Endothelial cell of umbilical vein (primary cell): ENCODE measurements at regions of chr11 and their contacts with region 1.

Region 1: DNA sequence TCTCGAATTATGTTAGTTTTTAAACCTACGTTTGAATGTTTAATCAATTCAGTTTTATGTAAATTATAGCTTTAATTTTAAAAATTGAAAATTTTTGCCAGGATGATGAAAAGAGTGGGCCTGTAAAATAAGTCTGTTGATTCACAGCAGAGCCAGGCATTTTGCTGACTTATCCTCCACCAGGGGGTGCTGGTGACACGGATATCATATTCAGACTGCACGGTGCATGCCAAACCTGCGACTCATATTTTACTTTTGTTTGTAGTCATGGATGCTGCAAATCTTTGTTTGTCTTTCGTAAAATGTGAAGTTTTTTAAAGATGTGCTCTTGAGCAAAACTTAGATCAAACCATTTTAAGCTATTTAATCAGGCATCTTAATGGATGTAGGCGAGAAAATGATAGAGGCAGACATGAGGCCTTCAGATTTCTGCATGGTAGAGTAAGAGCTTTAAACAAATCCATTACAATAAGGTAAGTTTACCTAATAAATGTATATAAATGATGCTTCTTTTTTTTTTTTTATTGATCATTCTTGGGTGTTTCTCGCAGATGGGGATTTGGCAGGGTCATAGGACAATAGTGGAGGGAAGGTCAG is 3.6 kb upstream of the OR8B3 start:
- DNase-seq: peak; percentile 67
- H3K4me3 ChIP-seq: no peak overlapping the region
- H3K27ac ChIP-seq: no peak overlapping the region
- H3K4me1 ChIP-seq: no peaks in the 10 kb centered on the region
- H3K27me3 ChIP-seq: peaks cover 2 to 10% of the 10 kb centered on the region in 2 experiments
- CTCF ChIP-seq: peak; percentile 80
- POLR2A ChIP-seq: no peak

Region 2: GRCh38 chr11:124586238-124586860 is 183.9 kb after region 1 on chr11:
- CTCF ChIA-PET with region 1: interaction called, 5 read pairs
- POLR2A ChIA-PET with region 1: no interaction called
- dilution Hi-C with region 1: no loop called
- intact Hi-C with region 1: loop called (anchors 1 kb)
- DNase-seq: peak; percentile 59
- H3K4me3 ChIP-seq: no peak overlapping the region
- H3K27ac ChIP-seq: no peak overlapping the region
- H3K4me1 ChIP-seq: no peaks in the 10 kb centered on the region
- H3K27me3 ChIP-seq: peaks cover 7 to 16% of the 10 kb centered on the region in 2 experiments
- CTCF ChIP-seq: peak; percentile 52 to 57
- POLR2A ChIP-seq: no peak